Activated naive CD4-positive, alpha-beta T cell treated with anti-CD3 and anti-CD28 coated beads for 36 hours (primary cell): ENCODE measurements at regions of chr11 and their contacts with region 1.

Region 1: GRCh38 chr11:44861849-44862749 is 88.6 kb downstream of the TP53I11 start:
- DNase-seq: peak; percentile 91
- H3K4me3 Mint-ChIP-seq: no peak overlapping the region
- H3K27ac Mint-ChIP-seq: no peak overlapping the region
- H3K4me1 Mint-ChIP-seq: peaks cover 32% of the 10 kb centered on the region
- H3K27me3 Mint-ChIP-seq: no peaks in the 10 kb centered on the region

Region 2: GRCh38 chr11:44680982-44681597 is 181.0 kb before region 1 on chr11:
- CTCF ChIA-PET with region 1: no interaction called
- intact Hi-C with region 1: loop called (anchors 2 kb)
- DNase-seq: peak; percentile 86
- H3K4me3 Mint-ChIP-seq: peak overlapping the region; percentile 20
- H3K27ac Mint-ChIP-seq: peak overlapping the region; percentile 71
- H3K4me1 Mint-ChIP-seq: peaks cover 43% of the 10 kb centered on the region
- H3K27me3 Mint-ChIP-seq: no peaks in the 10 kb centered on the region

Region 3: GRCh38 chr11:44785856-44786606 is 76.1 kb before region 1 on chr11:
- CTCF ChIA-PET with region 1: no interaction called
- intact Hi-C with region 1: loop called (anchors 5 kb)
- DNase-seq: peak; percentile 17
- H3K4me3 Mint-ChIP-seq: no peak overlapping the region
- H3K27ac Mint-ChIP-seq: no peak overlapping the region
- H3K4me1 Mint-ChIP-seq: peaks cover 10% of the 10 kb centered on the region
- H3K27me3 Mint-ChIP-seq: no peaks in the 10 kb centered on the region